ENCODE measurements at regions of chr4 and their contacts with region 1.

Region 1: GRCh38 chr4:73142995-73143547 is 73.6 kb upstream of the COX18 start:
- DNase-seq: peak in 1 of 5 donors; percentile 3
- H3K4me3 ChIP-seq: no peak overlapping the region
- H3K4me3 Mint-ChIP-seq: no peak overlapping the region
- H3K27ac ChIP-seq: no peak overlapping the region
- H3K27ac Mint-ChIP-seq: peak overlapping the region in 2 of 7 donors; percentile 63 to 78
- H3K4me1 ChIP-seq: no peaks in the 10 kb centered on the region
- H3K4me1 Mint-ChIP-seq: peaks cover 3 to 21% (median 5%) of the 10 kb centered on the region in 4 donors
- H3K27me3 ChIP-seq: no peaks in the 10 kb centered on the region
- H3K27me3 Mint-ChIP-seq: no peaks in the 10 kb centered on the region

Region 2: GRCh38 chr4:72701987-72702819 is 440.9 kb before region 1 on chr4:
- CTCF ChIA-PET with region 1: no interaction called
- POLR2A ChIA-PET with region 1: no interaction called
- intact Hi-C with region 1: loop called (anchors 5 kb)
- DNase-seq: peak in 4 of 5 donors; percentile 12 to 27 (median 26)
- H3K4me3 ChIP-seq: peak overlapping the region in 1 of 2 donors; percentile 34
- H3K4me3 Mint-ChIP-seq: peak overlapping the region; percentile 73 to 84 (median 81)
- H3K27ac ChIP-seq: no peak overlapping the region
- H3K27ac Mint-ChIP-seq: peak overlapping the region in 4 of 7 donors; percentile 15 to 85 (median 53)
- H3K4me1 ChIP-seq: no peaks in the 10 kb centered on the region
- H3K4me1 Mint-ChIP-seq: no peaks in the 10 kb centered on the region
- H3K27me3 ChIP-seq: no peaks in the 10 kb centered on the region
- H3K27me3 Mint-ChIP-seq: peaks cover 0 to 3% of the 10 kb centered on the region in 2 donors

Region 3: GRCh38 chr4:73109493-73109892 is 33.6 kb before region 1 on chr4:
- CTCF ChIA-PET with region 1: no interaction called
- POLR2A ChIA-PET with region 1: no interaction called
- intact Hi-C with region 1: no loop called
- DNase-seq: no peak
- H3K4me3 ChIP-seq: no peak overlapping the region
- H3K4me3 Mint-ChIP-seq: no peak overlapping the region
- H3K27ac ChIP-seq: no peak overlapping the region
- H3K27ac Mint-ChIP-seq: no peak overlapping the region
- H3K4me1 ChIP-seq: no peaks in the 10 kb centered on the region
- H3K4me1 Mint-ChIP-seq: peaks cover 0 to 5% (median 0%) of the 10 kb centered on the region in 4 donors
- H3K27me3 ChIP-seq: no peaks in the 10 kb centered on the region
- H3K27me3 Mint-ChIP-seq: no peaks in the 10 kb centered on the region

Region 4: DNA sequence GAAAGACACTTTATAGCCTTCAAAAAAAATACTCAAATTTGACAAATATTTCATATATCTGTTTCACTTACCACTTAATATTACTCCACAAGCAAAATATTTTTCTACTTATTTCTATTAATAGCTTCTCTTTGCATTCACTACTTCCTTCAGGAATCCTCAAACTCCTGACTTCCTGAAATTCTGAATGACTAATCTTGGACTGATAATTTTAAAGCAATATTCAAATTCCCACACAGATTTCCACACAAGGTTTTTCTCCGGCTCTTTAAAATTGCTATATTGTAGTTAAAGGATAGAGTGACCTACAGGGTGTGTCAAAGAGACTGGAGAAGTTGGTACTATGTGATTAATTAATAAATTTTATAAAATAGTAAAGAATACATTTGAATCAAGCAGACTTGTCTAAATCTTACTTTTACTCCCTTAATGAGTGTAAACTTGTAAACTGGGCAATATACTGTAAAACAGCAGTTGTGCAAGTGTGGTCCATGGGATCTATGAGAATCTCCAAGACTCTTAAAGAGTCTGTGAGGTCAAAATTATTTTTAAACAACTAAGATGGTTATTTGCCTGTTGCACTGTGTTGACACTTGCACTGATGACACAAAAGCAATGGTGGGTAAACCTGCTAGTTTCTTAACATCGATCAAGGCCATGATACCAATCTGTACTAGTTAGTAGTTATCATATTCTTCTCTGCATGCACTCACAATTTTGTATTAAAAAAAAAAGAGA is 71.0 kb after region 1 on chr4:
- CTCF ChIA-PET with region 1: no interaction called
- POLR2A ChIA-PET with region 1: no interaction called
- intact Hi-C with region 1: loop called (anchors 5 kb)
- DNase-seq: no peak
- H3K4me3 ChIP-seq: no peak overlapping the region
- H3K4me3 Mint-ChIP-seq: no peak overlapping the region
- H3K27ac ChIP-seq: no peak overlapping the region
- H3K27ac Mint-ChIP-seq: no peak overlapping the region
- H3K4me1 ChIP-seq: peaks cover 12% of the 10 kb centered on the region
- H3K4me1 Mint-ChIP-seq: peaks cover 19 to 49% (median 38%) of the 10 kb centered on the region in 4 donors
- H3K27me3 ChIP-seq: no peaks in the 10 kb centered on the region
- H3K27me3 Mint-ChIP-seq: no peaks in the 10 kb centered on the region